ENCODE measurements at regions of chr9 and their contacts with region 1.

Region 1: DNA sequence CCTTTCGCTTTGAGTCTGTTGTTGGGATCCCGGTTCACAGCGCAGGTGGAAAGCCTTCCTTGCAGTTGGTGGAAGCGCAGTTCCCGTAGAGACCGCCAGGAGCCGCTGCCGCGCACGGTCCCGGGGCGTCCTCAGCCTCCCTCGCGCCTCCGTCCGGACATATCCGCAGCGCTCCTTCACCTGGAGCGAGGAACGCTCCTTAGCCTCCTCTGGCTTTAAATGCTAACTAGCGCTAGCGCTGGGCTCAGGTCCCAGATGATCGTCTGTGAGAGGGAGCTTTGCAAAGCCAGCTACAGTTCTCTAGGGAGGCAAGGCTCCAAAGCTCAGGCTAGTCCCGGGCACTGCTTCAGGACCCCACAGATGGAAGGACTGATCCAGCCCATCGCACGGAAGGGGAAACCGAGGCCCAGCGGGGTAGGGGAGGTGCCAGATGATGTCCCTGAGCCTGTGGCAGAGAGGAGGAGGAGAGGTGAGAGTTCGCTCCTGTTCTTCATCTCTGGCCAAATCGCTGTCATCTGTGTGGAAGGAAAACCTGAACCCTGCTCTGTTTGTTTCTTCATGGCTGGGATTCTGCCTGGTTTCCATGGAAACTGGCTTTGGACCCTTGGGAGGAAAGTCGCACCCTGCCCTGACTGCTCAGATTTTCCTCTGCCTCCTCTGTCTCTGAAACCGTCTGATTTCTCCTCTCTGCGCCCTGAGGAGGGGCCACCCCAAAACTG is 31.4 kb downstream of the COL15A1 start:
- DNase-seq: peak; percentile 47
- H3K4me3 ChIP-seq: no peak overlapping the region
- H3K27ac ChIP-seq: no peak overlapping the region
- H3K4me1 ChIP-seq: no peaks in the 10 kb centered on the region
- CTCF ChIP-seq: peak; percentile 88

Region 2: DNA sequence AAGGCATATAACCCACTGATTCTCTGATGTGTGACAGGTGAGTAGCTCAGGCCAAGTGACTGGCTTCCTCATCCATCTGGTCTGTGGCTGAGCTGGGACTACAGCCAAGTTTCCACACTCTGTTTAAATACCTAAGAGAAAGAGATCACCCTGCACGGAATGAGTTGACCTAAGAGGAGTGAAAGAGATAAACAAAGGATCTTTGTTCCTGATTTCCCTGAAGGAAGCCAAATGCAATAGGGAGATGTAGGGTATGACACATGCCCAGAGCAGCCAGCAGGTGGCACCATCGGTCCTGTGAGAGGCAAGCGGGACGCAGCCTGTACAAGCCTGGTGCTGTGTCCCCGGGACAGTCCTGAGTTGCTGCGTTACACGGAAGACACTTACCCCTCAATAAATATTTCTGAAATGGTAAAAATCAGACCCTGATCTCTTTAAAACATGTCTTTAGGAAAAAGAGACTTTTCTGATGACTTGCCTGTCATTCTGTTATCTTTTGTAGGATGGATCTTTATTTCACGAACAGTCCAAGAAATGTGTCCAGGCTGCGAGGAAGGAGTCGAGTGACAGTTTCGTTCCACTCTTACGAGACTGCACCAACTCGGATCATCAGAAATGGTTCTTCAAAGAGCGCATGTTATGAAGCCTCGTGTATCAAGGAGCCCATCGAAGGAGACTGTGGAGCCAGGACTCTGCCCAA is 126.6 kb before region 1 on chr9:
- CTCF ChIA-PET with region 1: no interaction called
- POLR2A ChIA-PET with region 1: no interaction called
- intact Hi-C with region 1: loop called (anchors 5 kb)
- DNase-seq: peak; percentile 76
- H3K4me3 ChIP-seq: no peak overlapping the region
- H3K27ac ChIP-seq: no peak overlapping the region
- H3K4me1 ChIP-seq: no peaks in the 10 kb centered on the region
- CTCF ChIP-seq: peak; percentile 94